Sigmoid colon (tissue), 7 donors: ENCODE measurements at regions of chr1 and their contacts with region 1.

Region 1: DNA sequence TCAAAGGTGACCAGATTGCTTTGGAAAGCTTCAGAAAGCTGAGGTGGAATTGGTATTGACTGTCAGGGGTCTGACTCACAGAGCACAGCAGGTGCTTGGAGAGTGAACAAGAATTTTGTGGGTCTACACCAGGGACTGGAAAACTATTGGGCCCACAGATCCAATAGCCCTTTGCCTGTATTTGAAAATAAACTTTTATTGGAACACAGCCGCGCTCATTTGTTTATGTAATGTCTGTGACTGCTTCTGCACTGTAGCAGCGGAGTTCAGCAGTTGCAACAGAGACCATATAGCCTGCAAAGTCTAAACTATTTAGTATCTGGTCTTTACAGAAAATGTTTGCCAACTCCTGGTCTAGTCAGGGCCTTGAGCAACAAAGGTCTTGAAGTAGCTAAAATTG is 315.6 kb downstream of the NFIA start:
- DNase-seq: no peak
- H3K4me3 ChIP-seq: no peak overlapping the region
- H3K27ac ChIP-seq: peak overlapping the region in 3 of 4 donors; percentile 50 to 81 (median 75)
- H3K4me1 ChIP-seq: peaks cover 0 to 36% (median 32%) of the 10 kb centered on the region in 4 donors
- H3K27me3 ChIP-seq: no peaks in the 10 kb centered on the region
- CTCF ChIP-seq: no peak
- EP300 ChIP-seq: no peak
- POLR2A ChIP-seq: no peak

Region 2: GRCh38 chr1:61056573-61057439 is 341.1 kb before region 1 on chr1:
- intact Hi-C with region 1: loop called (anchors 5 kb)
- DNase-seq: peak; percentile 81
- H3K4me3 ChIP-seq: peak overlapping the region; percentile 46 to 80 (median 58)
- H3K27ac ChIP-seq: peak overlapping the region; percentile 94 to 99 (median 98)
- H3K4me1 ChIP-seq: peaks cover 0 to 57% (median 49%) of the 10 kb centered on the region in 4 donors
- H3K27me3 ChIP-seq: no peaks in the 10 kb centered on the region
- CTCF ChIP-seq: no peak
- EP300 ChIP-seq: peak in 2 of 4 donors; percentile 3 to 8
- POLR2A ChIP-seq: no peak